ENCODE measurements at regions of chr6 and their contacts with region 1.

Region 1: DNA sequence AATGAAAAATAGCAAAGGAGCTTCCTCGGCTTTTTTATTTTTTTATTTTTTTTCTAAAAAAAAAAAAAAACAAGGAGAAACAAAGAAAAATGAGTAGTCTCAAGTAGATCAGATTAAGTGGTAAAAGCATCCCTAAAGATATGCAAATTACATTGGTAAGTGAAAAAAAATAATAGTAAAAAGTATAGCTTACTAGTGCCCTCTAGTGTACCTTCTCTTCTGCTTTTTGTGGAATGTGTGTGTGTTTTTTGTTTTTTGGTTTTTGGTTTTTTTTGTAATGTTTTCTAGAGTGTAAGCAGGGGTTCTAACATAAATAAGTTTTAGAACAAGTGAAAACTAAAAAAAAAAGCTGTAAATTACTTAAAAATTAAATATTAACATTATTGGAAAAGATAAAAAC is 1062.0 kb downstream of the HACE1 start:
- DNase-seq: no peak
- ATAC-seq: no peak
- H3K4me3 ChIP-seq: no peak overlapping the region
- H3K4me3 Mint-ChIP-seq: no peak overlapping the region
- H3K27ac ChIP-seq: no peak overlapping the region
- H3K27ac Mint-ChIP-seq: no peak overlapping the region
- H3K4me1 ChIP-seq: no peaks in the 10 kb centered on the region
- H3K4me1 Mint-ChIP-seq: no peaks in the 10 kb centered on the region
- H3K27me3 ChIP-seq: no peaks in the 10 kb centered on the region
- H3K27me3 Mint-ChIP-seq: no peaks in the 10 kb centered on the region

Region 2: DNA sequence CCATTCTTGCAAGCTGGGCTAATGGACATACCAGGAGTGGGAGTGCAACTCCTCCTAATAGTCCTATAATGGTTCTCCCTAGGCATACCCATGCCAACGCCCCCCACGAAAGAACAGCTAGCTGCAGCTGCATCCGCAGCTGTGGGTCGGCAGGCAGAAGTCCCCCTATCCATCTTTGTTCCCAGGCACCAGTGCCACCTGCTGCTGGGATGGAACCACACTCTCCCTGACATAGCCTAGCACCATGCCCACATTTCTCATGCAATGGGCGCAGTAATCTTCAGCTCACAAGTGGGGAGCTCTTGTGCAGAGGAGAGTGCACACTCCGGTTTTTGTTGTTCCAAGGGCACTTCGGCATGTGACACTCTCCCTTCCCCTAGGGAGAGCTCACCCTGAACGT is 1836.4 kb before region 1 on chr6:
- CTCF ChIA-PET with region 1: no interaction called
- POLR2A ChIA-PET with region 1: interaction called in 1 of 2 experiments, 11 read pairs
- DNase-seq: no peak
- ATAC-seq: no peak
- H3K4me3 ChIP-seq: no peak overlapping the region
- H3K4me3 Mint-ChIP-seq: no peak overlapping the region
- H3K27ac ChIP-seq: no peak overlapping the region
- H3K27ac Mint-ChIP-seq: no peak overlapping the region
- H3K4me1 ChIP-seq: no peaks in the 10 kb centered on the region
- H3K4me1 Mint-ChIP-seq: no peaks in the 10 kb centered on the region
- H3K27me3 ChIP-seq: no peaks in the 10 kb centered on the region
- H3K27me3 Mint-ChIP-seq: no peaks in the 10 kb centered on the region

Measured in T-cell (primary cell).